Activated CD4-positive, alpha-beta T cell treated with anti-CD3 and anti-CD28 coated beads for 36 hours (primary cell): ENCODE measurements at regions of chr9 and their contacts with region 1.

Region 1: DNA sequence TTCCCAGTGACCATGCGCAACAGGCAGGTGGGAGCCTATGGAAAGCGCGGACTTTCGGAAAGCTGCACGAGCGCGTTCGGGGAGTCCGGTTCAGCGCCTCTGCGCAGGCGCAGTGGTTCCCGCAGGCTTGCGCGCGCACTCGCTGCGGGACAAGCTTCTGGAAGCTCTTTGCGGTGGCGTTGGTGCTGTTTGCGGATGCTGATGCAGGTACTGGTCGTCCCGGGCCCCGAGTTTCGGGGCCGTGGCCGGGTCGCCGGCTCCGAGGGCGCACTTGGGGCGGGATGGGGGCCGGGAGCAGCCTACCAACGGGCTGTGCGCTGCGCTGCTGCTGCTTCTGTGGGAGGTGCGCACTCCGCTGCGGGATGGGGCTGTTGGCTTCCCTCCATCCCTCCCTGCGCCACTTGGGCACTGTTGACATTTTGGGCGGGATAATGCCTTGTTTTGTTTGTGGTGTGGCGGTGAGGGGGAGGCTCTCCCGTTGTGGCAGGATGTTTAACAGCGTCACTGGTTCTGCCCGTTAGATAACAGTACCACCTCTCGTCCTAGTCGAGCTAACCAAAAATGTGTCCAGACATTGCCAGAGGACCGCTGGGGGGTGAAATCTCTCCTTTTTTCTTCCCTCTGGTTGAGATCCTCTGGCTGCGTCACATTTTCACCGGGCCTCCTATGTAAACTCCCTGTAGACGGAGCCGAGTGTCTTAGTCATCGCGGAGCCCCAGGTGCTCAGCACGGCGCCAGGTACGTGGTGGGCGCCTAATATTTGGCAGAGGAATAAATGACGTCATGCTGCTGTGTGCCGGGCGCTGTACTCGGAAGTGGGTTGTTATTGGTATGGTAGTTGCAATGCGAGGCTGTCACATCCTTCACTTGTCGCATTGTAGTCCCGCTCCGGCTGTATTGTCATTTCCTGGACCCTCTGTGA is at the start of gene ZNF483:
- DNase-seq: peak; percentile 80
- ATAC-seq: peak; percentile 71
- H3K4me3 Mint-ChIP-seq: peak within 1 kb of the TSS; percentile 90
- H3K27ac Mint-ChIP-seq: peak within 1 kb of the TSS; percentile 87
- H3K4me1 Mint-ChIP-seq: peaks cover 25% of the 10 kb centered on the region
- H3K27me3 Mint-ChIP-seq: no peaks in the 10 kb centered on the region
- total RNA-seq, gene ZNF483: 2.5 to 3.0 TPM

Region 2: DNA sequence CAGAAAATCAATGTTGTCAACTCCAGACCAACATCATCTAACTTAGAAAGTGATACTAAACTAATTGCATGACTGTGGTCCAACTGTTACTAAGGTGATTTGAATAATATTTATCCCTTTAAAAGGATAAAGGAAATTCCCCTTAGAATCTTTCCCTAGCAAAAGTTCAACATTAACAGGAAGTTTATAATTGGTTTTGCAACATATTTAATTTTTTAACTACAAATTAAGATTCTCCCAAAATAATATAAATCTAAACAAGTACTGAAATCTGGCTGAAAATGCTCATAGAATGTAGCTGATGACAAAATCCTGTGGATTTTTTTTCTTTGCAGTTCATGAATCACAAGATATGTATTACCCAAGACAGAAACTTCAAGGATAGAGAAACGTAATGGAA is 638.5 kb before region 1 on chr9:
- CTCF ChIA-PET with region 1: no interaction called
- POLR2A ChIA-PET with region 1: no interaction called
- intact Hi-C with region 1: no loop called
- DNase-seq: no peak
- ATAC-seq: no peak
- H3K4me3 Mint-ChIP-seq: no peak overlapping the region
- H3K27ac Mint-ChIP-seq: no peak overlapping the region
- H3K4me1 Mint-ChIP-seq: no peaks in the 10 kb centered on the region
- H3K27me3 Mint-ChIP-seq: no peaks in the 10 kb centered on the region

Region 3: GRCh38 chr9:111661150-111661801 is 136.0 kb after region 1 on chr9 and contains the start of gene GNG10:
- CTCF ChIA-PET with region 1: no interaction called
- POLR2A ChIA-PET with region 1: no interaction called
- intact Hi-C with region 1: loop called in 1 of 2 experiments (anchors 5 kb)
- DNase-seq: peak; percentile 81
- ATAC-seq: peak; percentile 92
- H3K4me3 Mint-ChIP-seq: peak within 1 kb of the TSS; percentile 98
- H3K27ac Mint-ChIP-seq: peak within 1 kb of the TSS; percentile 95
- H3K4me1 Mint-ChIP-seq: peaks cover 25% of the 10 kb centered on the region
- H3K27me3 Mint-ChIP-seq: no peaks in the 10 kb centered on the region
- total RNA-seq, gene GNG10: 14.5 to 15.4 TPM